ENCODE measurements at regions of chr7 and their contacts with region 1.

Region 1: GRCh38 chr7:66844552-66845378 is 76.3 kb upstream of the TMEM248 start:
- DNase-seq: peak; percentile 97
- ATAC-seq: peak; percentile 91
- H3K4me3 Mint-ChIP-seq: peak overlapping the region; percentile 91
- H3K27ac Mint-ChIP-seq: peak overlapping the region; percentile 99
- H3K4me1 Mint-ChIP-seq: peaks cover 25% of the 10 kb centered on the region
- H3K27me3 Mint-ChIP-seq: no peaks in the 10 kb centered on the region
- CTCF ChIP-seq: peak; percentile 70

Region 2: GRCh38 chr7:66886152-66886551 is 41.4 kb after region 1 on chr7:
- CTCF ChIA-PET with region 1: no interaction called
- POLR2A ChIA-PET with region 1: interaction called, 4 read pairs
- intact Hi-C with region 1: loop called (anchors 5 kb)
- DNase-seq: peak; percentile 16
- ATAC-seq: no peak
- H3K4me3 Mint-ChIP-seq: no peak overlapping the region
- H3K27ac Mint-ChIP-seq: peak overlapping the region; percentile 85
- H3K4me1 Mint-ChIP-seq: peaks cover 33% of the 10 kb centered on the region
- H3K27me3 Mint-ChIP-seq: no peaks in the 10 kb centered on the region
- CTCF ChIP-seq: no peak

Region 3: GRCh38 chr7:66920769-66921395 is 76.1 kb after region 1 on chr7 and contains the start of gene TMEM248:
- CTCF ChIA-PET with region 1: no interaction called
- POLR2A ChIA-PET with region 1: interaction called, 12 read pairs
- intact Hi-C with region 1: no loop called
- DNase-seq: peak; percentile 93
- ATAC-seq: peak; percentile 94
- H3K4me3 Mint-ChIP-seq: peak within 1 kb of the TSS; percentile 94
- H3K27ac Mint-ChIP-seq: peak within 1 kb of the TSS; percentile 97
- H3K4me1 Mint-ChIP-seq: peaks cover 28% of the 10 kb centered on the region
- H3K27me3 Mint-ChIP-seq: no peaks in the 10 kb centered on the region
- CTCF ChIP-seq: no peak
- total RNA-seq, gene TMEM248: 66.7 to 76.1 TPM

Measured in activated CD8-positive, alpha-beta T cell treated with anti-CD3 and anti-CD28 coated beads for 36 hours (primary cell).